H1 (cell line): ENCODE measurements at regions of chr11 and their contacts with region 1.

Region 1: DNA sequence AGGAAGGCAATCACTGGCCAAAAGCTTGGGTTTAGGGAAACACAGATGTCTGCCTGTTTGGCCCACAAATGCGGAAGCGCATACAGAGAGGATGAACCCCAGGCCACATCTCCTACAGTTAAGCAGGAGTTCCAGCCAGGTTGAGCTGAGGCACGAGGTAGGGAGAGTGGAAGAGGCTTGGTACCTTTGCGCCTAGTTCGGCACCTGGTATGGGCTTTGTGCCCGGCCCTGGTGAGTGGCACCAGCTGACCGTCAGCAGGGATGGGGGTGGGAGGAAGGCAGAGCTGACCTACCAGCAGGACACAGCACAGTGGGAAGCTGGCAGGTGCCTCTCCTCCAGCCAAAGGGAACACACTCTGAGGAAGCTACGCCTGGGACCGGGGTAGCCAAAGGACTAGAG is 57.6 kb downstream of the KCNC1 start:
- DNase-seq: no peak
- H3K4me3 ChIP-seq: no peak overlapping the region
- H3K27ac ChIP-seq: no peak overlapping the region
- H3K4me1 ChIP-seq: no peaks in the 10 kb centered on the region
- H3K27me3 ChIP-seq: no peaks in the 10 kb centered on the region
- CTCF ChIP-seq: no peak
- EP300 ChIP-seq: no peak
- POLR2A ChIP-seq: no peak
- RAD21 ChIP-seq: no peak

Region 2: DNA sequence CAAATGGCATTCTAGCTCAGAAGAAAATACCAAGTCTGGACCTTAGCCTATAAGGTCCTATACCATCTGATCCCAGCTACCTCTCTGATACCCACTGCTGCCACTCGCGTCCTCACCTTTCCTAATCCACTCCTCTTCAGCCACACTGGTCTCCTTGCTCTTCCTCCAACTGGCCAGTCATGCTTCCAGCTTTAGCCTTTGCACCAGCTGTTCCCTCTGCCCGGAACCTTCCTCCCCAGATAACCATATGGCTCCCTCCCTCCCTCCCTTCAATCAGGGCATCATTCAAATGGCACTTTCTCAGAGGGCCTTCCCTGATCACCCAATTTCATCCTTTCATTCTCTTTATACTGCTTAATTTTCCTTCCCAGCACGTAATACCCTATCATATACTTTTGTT is 10.3 kb after region 1 on chr11:
- CTCF ChIA-PET with region 1: interaction called, 11 read pairs
- POLR2A ChIA-PET with region 1: interaction called, 3 read pairs
- DNase-seq: no peak
- H3K4me3 ChIP-seq: no peak overlapping the region
- H3K27ac ChIP-seq: no peak overlapping the region
- H3K4me1 ChIP-seq: peaks cover 0 to 11% (median 4%) of the 10 kb centered on the region in 4 experiments; a peak in 5 of 7 replicates
- H3K27me3 ChIP-seq: no peaks in the 10 kb centered on the region; a peak in 1 of 7 replicates
- CTCF ChIP-seq: no peak
- EP300 ChIP-seq: no peak
- POLR2A ChIP-seq: no peak
- RAD21 ChIP-seq: no peak